Activated T-helper 1 cell treated with anti-CD3 and anti-CD28 coated beads, Interleukin-12 subunit alpha, Interleukin-12 subunit beta, Interleukin-2, Interleukin-4 antibody, amounts not matched to agents 30 ng/mL and 10 ng/mL and 1 ng/mL, durations not matched to agents 14 hours and 24 hours and 36 hours (primary cell): ENCODE measurements at regions of chr2 and their contacts with region 1.

Region 1: GRCh38 chr2:108637304-108637669 is 82.0 kb upstream of the RANBP2 start:
- DNase-seq: no peak
- H3K4me3 Mint-ChIP-seq: no peak overlapping the region
- H3K27ac Mint-ChIP-seq: peak overlapping the region; percentile 67
- H3K4me1 Mint-ChIP-seq: peaks cover 77% of the 10 kb centered on the region
- H3K27me3 Mint-ChIP-seq: no peaks in the 10 kb centered on the region

Region 2: DNA sequence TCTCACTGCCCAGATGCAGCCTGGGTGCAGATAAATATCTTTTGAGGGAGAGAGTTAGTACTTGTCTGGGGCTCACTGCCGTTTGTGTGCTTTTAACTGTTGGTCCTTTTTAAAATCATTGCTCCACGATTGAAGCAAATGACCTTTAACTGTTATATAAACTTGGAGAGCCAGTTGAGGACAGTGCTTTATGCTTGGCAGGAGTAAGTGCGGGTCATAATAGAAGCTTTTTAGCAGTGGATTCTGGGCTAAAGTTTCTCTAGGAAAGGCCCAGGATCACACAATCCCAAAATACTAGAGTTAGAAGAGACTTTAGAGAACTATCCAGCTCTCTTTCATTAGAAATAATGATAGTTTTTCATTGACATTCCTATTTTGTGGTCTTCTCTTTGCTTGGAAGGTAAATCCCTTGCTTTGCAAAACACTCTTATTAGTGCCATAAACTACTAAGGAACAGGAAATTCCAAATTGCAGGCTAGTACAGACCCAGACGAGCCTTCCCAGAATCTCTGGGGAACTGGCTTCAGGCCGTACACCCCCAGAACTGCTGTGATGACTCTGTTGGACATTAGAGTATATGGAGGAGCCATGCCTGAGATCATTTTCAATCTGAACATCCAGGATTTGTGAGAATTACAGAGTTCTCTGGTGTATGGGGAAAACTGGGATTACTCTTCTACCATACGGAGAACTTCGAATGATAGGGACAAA is 83.9 kb before region 1 on chr2:
- intact Hi-C with region 1: no loop called
- DNase-seq: no peak
- H3K4me3 Mint-ChIP-seq: no peak overlapping the region
- H3K27ac Mint-ChIP-seq: no peak overlapping the region
- H3K4me1 Mint-ChIP-seq: peaks cover 5% of the 10 kb centered on the region
- H3K27me3 Mint-ChIP-seq: no peaks in the 10 kb centered on the region

Region 3: GRCh38 chr2:108719149-108720044 is 82.1 kb after region 1 on chr2 and contains the start of gene RANBP2:
- intact Hi-C with region 1: loop called (anchors 5 kb)
- DNase-seq: peak; percentile 92
- H3K4me3 Mint-ChIP-seq: peak within 1 kb of the TSS; percentile 94
- H3K27ac Mint-ChIP-seq: peak within 1 kb of the TSS; percentile 99
- H3K4me1 Mint-ChIP-seq: peaks cover 16% of the 10 kb centered on the region
- H3K27me3 Mint-ChIP-seq: no peaks in the 10 kb centered on the region
- total RNA-seq, gene RANBP2: 68.0 and 74.1 TPM in 2 replicates